A673 (cell line): ENCODE measurements at regions of chr4 and their contacts with region 1.

Region 1: GRCh38 chr4:168604496-168605373 is 107.9 kb downstream of the PALLD start:
- DNase-seq: peak; percentile 96
- H3K4me3 ChIP-seq: peak overlapping the region; percentile 11
- H3K27ac ChIP-seq: peak overlapping the region; percentile 79
- H3K4me1 ChIP-seq: peaks cover 71% of the 10 kb centered on the region
- H3K27me3 ChIP-seq: no peaks in the 10 kb centered on the region
- CTCF ChIP-seq: no peak

Region 2: DNA sequence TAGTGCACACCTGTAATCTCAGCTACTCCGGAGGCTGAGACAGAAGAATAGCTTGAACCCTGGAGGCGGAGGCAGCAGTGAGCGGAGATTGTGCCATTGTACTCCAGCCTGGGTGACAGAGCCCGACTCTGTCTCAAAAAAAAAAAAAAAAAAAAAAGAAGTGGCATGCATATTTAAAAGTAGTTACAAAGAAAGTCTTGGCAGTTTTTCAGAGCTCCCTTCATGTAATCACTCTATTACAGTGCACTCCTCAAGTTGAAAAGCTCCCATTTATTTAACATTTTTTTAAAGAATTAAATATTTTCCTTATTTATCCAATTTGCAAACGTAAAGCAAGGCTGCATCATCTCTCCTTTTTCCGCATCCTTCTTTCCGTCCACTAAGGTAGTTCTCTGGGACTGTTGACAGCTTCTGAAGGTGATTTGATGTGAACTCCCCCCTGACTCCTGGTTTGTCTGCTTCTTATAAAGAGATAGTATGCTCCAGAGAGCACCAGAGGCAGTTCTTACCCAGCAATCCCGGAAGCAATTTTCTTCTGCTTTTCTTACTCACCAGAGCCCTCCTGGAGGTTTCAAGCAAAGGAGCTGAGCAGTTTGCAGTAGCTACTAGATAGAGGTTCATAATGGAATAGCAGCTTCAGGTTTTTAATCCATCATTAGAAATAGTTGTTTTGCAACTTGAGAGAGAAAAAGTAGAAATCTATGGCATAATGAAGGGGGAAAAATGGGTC is 43.1 kb after region 1 on chr4:
- CTCF ChIA-PET with region 1: no interaction called
- POLR2A ChIA-PET with region 1: interaction called, 11 read pairs
- intact Hi-C with region 1: no loop called
- DNase-seq: peak; percentile 92
- H3K4me3 ChIP-seq: peak overlapping the region; percentile 16
- H3K27ac ChIP-seq: peak overlapping the region; percentile 48
- H3K4me1 ChIP-seq: peaks cover 82% of the 10 kb centered on the region
- H3K27me3 ChIP-seq: no peaks in the 10 kb centered on the region
- CTCF ChIP-seq: no peak